Activated CD8-positive, alpha-beta T cell treated with anti-CD3 and anti-CD28 coated beads for 36 hours (primary cell): ENCODE measurements at regions of chr19 and their contacts with region 1.

Region 1: DNA sequence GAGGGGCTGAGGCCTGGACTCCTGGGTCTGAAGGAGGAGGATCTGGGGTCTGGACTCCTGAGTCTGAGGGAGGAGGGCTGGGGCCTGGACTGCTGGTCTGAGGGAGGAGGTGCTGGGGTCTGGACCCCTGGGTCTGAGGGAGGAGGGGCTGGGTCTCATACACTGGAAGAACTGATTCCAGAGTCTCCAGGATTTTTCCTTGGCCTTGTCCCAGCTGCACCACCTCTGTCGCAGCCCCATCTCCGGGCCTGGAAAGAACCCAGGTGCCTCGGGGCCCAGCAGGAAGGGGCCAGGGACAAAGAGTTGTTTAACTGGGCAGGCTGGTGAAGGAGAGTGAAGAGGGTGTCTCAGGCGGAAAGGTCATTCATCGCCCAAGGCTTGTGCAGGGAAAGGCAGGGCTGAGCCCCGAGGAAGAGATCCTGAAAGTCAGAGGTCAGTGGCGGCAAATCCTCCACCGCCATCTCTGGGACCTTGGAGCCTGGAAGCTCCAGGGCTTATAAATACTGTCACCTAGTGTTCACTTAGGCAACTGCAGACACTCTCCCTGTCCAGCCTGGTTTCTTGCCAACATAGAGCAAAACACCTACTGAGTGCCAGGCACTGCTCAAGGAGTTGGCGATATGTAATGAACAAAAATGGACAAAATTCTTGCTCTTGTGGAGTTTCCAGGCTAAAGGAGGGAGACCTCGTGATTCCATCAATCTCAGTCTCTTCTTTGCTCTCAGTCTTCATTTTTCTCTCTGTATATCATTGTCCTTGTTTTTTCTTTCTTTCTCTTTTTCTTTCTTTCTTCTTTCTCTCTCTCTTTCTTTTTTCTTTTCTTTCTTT is 4.4 kb upstream of the KCNN4 start:
- DNase-seq: peak; percentile 71
- ATAC-seq: peak; percentile 23
- H3K4me3 Mint-ChIP-seq: peak overlapping the region; percentile 67
- H3K27ac Mint-ChIP-seq: peak overlapping the region; percentile 94
- H3K4me1 Mint-ChIP-seq: peaks cover 39% of the 10 kb centered on the region
- H3K27me3 Mint-ChIP-seq: peaks cover 6% of the 10 kb centered on the region
- CTCF ChIP-seq: peak; percentile 95

Region 2: DNA sequence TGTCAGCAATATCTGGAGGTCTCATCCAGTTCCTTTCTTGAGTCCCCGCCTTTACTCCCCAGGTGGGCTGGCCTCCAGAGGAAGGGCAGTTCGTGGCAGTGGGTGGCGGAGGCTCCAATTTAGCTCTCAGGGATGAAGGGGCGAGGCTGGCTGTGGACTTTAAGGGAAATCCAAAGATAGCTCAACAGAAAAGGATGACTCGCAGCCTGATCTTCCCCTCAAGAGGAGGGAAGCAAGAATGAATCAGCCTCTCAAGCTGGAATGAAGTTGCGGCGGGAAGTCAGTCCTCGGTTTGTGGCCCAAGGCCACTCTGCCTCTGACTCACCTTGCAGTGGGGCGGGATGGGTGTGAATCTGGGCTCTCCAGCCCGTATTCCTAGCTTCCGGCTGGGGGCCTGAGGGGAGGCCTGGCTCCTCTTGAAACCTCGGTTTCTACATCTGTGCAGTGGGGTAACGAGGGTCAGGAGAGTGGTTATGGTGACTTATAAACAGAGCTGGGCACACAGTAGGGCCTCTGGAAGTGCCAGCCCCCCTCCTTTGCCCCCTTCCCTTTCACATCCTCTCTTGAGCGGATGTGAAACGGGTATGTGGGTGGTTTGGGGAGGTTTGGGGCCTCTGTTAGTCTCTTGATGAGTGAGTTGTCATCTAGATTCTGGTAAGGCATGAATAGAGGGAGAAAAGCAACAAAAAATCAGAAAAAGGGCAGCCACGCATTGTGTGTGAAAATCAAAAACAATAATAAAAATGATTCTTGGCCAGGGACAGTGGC is 19.9 kb before region 1 on chr19:
- CTCF ChIA-PET with region 1: interaction called, 122 read pairs
- POLR2A ChIA-PET with region 1: interaction called, 137 read pairs
- intact Hi-C with region 1: loop called (anchors 2 kb)
- DNase-seq: peak; percentile 95
- ATAC-seq: peak; percentile 83
- H3K4me3 Mint-ChIP-seq: peak overlapping the region; percentile 43
- H3K27ac Mint-ChIP-seq: peak overlapping the region; percentile 95
- H3K4me1 Mint-ChIP-seq: peaks cover 66% of the 10 kb centered on the region
- H3K27me3 Mint-ChIP-seq: no peaks in the 10 kb centered on the region
- CTCF ChIP-seq: no peak

Region 3: GRCh38 chr19:43842007-43842406 is 56.8 kb after region 1 on chr19:
- CTCF ChIA-PET with region 1: no interaction called
- POLR2A ChIA-PET with region 1: no interaction called
- intact Hi-C with region 1: no loop called
- DNase-seq: no peak
- ATAC-seq: no peak
- H3K4me3 Mint-ChIP-seq: no peak overlapping the region
- H3K27ac Mint-ChIP-seq: no peak overlapping the region
- H3K4me1 Mint-ChIP-seq: no peaks in the 10 kb centered on the region
- H3K27me3 Mint-ChIP-seq: no peaks in the 10 kb centered on the region
- CTCF ChIP-seq: no peak